Activated CD8-positive, alpha-beta T cell treated with anti-CD3 and anti-CD28 coated beads for 36 hours (primary cell): ENCODE measurements at regions of chr11 and their contacts with region 1.

Region 1: GRCh38 chr11:62905927-62906531 is 15.1 kb downstream of the CHRM1 start:
- DNase-seq: peak; percentile 82
- ATAC-seq: peak; percentile 82
- H3K4me3 Mint-ChIP-seq: no peak overlapping the region
- H3K27ac Mint-ChIP-seq: no peak overlapping the region
- H3K4me1 Mint-ChIP-seq: peaks cover 23% of the 10 kb centered on the region
- H3K27me3 Mint-ChIP-seq: peaks cover 12% of the 10 kb centered on the region
- CTCF ChIP-seq: peak; percentile 94

Region 2: GRCh38 chr11:62889484-62890437 is 16.3 kb before region 1 on chr11:
- CTCF ChIA-PET with region 1: interaction called, 34 read pairs
- POLR2A ChIA-PET with region 1: interaction called, 9 read pairs
- intact Hi-C with region 1: no loop called
- DNase-seq: peak; percentile 30
- ATAC-seq: peak; percentile 29
- H3K4me3 Mint-ChIP-seq: no peak overlapping the region
- H3K27ac Mint-ChIP-seq: peak overlapping the region; percentile 57
- H3K4me1 Mint-ChIP-seq: peaks cover 35% of the 10 kb centered on the region
- H3K27me3 Mint-ChIP-seq: no peaks in the 10 kb centered on the region
- CTCF ChIP-seq: no peak

Region 3: DNA sequence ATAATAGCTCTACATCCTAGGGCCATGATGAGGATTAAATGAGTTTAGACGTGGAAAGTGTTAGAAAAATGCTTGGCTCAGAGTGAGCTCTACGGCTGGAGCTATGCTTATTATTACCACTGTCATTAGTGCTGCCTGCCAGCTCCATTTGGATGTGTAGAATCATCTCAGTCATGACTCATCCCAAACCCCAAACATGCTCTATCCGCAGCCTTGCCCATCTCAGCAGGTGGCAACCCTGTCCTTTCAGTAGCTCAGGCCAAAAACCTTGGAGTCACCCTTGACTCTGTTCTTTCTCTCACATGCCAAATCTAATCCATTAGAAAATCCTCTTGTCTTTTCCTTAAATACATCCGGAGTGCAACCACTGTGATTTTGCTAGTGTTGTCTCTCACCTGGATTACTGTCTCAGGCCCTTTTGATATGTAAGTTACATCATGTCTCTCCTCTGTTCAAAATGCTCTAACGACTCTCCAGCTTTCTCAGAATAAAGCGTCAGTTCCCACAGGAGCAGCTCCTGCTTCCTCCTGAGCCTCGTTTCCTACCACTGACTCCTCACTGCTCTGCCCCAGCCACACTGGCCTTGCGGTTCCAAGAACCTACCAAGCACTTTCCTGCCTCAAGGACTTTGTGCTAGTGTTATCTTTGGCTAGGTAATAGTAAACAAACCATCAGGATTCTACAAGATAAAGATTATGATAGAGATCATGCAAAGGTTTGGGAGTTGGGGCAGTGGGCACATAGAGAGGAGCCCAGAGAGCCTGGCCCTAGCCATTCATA is 25.7 kb after region 1 on chr11:
- CTCF ChIA-PET with region 1: interaction called, 25 read pairs
- POLR2A ChIA-PET with region 1: no interaction called
- intact Hi-C with region 1: no loop called
- DNase-seq: no peak
- ATAC-seq: no peak
- H3K4me3 Mint-ChIP-seq: no peak overlapping the region
- H3K27ac Mint-ChIP-seq: no peak overlapping the region
- H3K4me1 Mint-ChIP-seq: no peaks in the 10 kb centered on the region
- H3K27me3 Mint-ChIP-seq: peaks cover 34% of the 10 kb centered on the region
- CTCF ChIP-seq: no peak

Region 4: DNA sequence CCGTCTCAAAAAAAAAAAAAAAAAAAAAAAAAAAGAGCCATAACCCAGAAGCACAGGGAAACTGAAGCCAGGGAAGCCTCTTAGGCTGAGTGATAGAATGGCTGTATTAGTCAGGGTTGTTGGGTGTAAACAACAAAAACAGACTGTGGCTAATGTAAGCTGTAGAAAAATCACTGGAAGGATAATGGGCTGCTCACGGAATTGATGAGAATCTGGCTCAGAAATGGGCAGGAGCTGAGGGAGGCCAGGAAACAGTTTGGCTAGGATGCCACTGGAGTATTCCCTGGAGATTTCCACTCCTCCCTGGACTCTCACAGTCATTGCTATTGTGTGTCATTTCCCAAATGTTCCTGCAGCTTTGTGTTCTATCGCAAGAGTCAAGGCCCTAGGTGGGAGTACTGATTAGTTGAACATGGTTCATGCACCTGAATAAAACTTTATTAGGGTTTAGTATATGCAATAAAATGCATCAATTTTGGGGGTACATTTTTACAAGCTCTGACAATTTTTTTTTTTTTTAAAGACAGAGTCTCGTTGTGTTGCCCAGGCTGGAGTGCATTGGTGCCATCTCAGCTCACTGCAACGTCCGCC is 56.5 kb after region 1 on chr11:
- CTCF ChIA-PET with region 1: interaction called, 11 read pairs
- POLR2A ChIA-PET with region 1: no interaction called
- intact Hi-C with region 1: no loop called
- DNase-seq: no peak
- ATAC-seq: no peak
- H3K4me3 Mint-ChIP-seq: no peak overlapping the region
- H3K27ac Mint-ChIP-seq: no peak overlapping the region
- H3K4me1 Mint-ChIP-seq: no peaks in the 10 kb centered on the region
- H3K27me3 Mint-ChIP-seq: peaks cover 9% of the 10 kb centered on the region
- CTCF ChIP-seq: no peak

Region 5: DNA sequence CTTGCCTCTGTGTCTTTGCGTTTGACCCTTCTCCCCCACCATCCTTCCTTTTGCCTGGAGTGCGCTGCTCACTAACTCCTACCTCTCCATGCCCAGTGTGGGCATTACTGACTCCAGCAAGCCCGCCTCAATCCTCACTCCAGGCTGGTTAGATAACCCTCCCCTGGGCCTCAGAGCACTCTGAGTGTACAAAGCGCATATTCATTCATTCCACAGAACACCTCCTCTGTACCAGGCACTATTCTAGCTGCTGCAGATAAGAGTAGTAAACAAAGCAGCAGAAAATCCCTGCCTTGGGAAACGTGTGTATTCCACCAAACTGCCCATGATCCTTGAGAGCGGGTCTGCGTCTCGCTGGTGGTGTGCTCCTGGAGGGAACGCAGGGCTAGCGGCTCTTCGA is 106.4 kb after region 1 on chr11:
- CTCF ChIA-PET with region 1: interaction called, 411 read pairs
- POLR2A ChIA-PET with region 1: no interaction called
- intact Hi-C with region 1: no loop called
- DNase-seq: no peak
- ATAC-seq: no peak
- H3K4me3 Mint-ChIP-seq: no peak overlapping the region
- H3K27ac Mint-ChIP-seq: no peak overlapping the region
- H3K4me1 Mint-ChIP-seq: no peaks in the 10 kb centered on the region
- H3K27me3 Mint-ChIP-seq: peaks cover 5% of the 10 kb centered on the region
- CTCF ChIP-seq: no peak

Region 6: GRCh38 chr11:63032457-63032856 is 126.4 kb after region 1 on chr11:
- CTCF ChIA-PET with region 1: interaction called, 56 read pairs
- POLR2A ChIA-PET with region 1: interaction called, 3 read pairs
- intact Hi-C with region 1: no loop called
- DNase-seq: no peak
- ATAC-seq: no peak
- H3K4me3 Mint-ChIP-seq: no peak overlapping the region
- H3K27ac Mint-ChIP-seq: no peak overlapping the region
- H3K4me1 Mint-ChIP-seq: no peaks in the 10 kb centered on the region
- H3K27me3 Mint-ChIP-seq: peaks cover 12% of the 10 kb centered on the region
- CTCF ChIP-seq: no peak